OCI-LY7 (cell line): ENCODE measurements at regions of chr12 and their contacts with region 1.

Region 1: GRCh38 chr12:55931780-55932550 is 1.0 kb downstream of the DGKA start:
- DNase-seq: peak; percentile 48
- H3K4me3 ChIP-seq: peak overlapping the region; percentile 78
- H3K27ac ChIP-seq: peak overlapping the region; percentile 99
- H3K4me1 ChIP-seq: peaks cover 49% of the 10 kb centered on the region
- CTCF ChIP-seq: no peak

Region 2: GRCh38 chr12:55973598-55974307 is 41.8 kb after region 1 on chr12 and contains the start of gene RAB5B:
- CTCF ChIA-PET with region 1: no interaction called
- POLR2A ChIA-PET with region 1: interaction called, 11 read pairs
- intact Hi-C with region 1: loop called (anchors 1 kb)
- DNase-seq: peak; percentile 100
- H3K4me3 ChIP-seq: peak within 1 kb of the TSS; percentile 88
- H3K27ac ChIP-seq: peak within 1 kb of the TSS; percentile 57
- H3K4me1 ChIP-seq: peaks cover 25% of the 10 kb centered on the region
- CTCF ChIP-seq: no peak
- total RNA-seq, gene RAB5B: 21.6 and 21.8 TPM in 2 replicates